Activated CD8-positive, alpha-beta memory T cell treated with anti-CD3 and anti-CD28 coated beads, Interleukin-2, amount 10 ng/mL, durations not matched to agents 7 days and 5 days (primary cell): ENCODE measurements at regions of chr3 and their contacts with region 1.

Region 1: DNA sequence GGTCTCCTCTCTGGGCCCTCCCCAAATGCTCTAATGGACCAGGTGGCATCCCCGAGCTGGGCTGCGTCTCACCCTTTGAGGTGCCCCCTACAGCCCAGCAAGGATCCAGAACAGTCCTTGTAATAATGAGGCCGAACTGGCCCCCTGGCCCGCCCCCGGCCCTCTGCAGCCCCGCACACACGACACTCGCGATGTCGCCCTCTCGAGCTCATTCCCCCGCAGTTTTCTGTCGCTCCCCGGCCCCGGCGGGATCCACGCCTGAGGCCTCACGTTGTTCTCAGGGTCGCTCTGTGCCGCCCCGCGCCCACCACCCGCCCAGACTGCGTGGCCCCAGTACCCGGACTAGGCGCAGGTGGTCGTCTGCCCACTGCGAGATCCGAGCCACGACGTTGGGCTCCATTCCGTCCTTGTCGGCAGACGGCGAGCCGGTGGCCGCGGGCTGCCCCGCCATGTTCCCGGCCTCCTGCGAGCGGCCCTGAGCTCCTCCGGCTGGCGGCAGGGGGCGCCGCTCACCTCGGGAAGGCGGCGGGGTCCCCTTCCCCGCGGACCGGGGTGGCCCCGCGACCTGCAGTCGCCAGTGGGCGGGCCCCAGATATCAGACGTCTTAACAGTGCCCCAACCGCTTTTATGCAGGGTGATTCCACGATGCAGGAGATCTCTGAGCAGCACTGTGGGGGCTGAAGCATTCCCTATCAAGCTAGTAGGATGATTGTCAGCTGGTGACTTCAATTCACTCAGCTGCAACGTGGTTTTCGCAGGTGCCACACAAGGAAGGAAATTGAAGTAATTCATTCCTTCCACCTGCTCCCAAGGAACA is at the start of gene C3orf33:
- DNase-seq: peak; percentile 79
- ATAC-seq: peak; percentile 98
- H3K4me3 Mint-ChIP-seq: peak within 1 kb of the TSS; percentile 83
- H3K27ac Mint-ChIP-seq: peak within 1 kb of the TSS; percentile 76
- H3K4me1 Mint-ChIP-seq: peaks cover 8% of the 10 kb centered on the region
- H3K27me3 Mint-ChIP-seq: peaks cover 9% of the 10 kb centered on the region
- total RNA-seq, gene C3orf33: 1.1 to 1.3 TPM

Region 2: GRCh38 chr3:155791190-155791589 is 14.8 kb before region 1 on chr3:
- CTCF ChIA-PET with region 1: interaction called, 21 read pairs
- DNase-seq: no peak
- ATAC-seq: no peak
- H3K4me3 Mint-ChIP-seq: no peak overlapping the region
- H3K27ac Mint-ChIP-seq: no peak overlapping the region
- H3K4me1 Mint-ChIP-seq: peaks cover under 1% of the 10 kb centered on the region
- H3K27me3 Mint-ChIP-seq: no peaks in the 10 kb centered on the region

Region 3: DNA sequence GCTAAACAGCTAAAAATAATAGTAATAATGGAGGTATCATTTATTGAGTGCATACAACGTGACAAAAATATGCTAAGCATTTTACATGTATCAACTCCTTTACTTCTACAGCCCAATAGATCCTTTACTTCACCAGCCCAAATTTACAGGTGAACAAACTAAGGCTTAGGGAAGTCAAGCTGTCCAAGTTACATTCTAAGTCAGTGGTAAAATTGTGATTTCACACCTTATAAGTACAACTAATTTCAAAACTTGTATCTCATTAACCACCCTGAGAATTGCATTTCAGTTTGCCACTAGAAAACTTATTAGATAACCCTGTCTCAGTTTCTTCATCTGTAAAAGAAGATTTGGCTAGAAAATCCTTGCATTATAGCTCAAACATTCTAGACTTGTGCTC is 37.6 kb after region 1 on chr3:
- CTCF ChIA-PET with region 1: interaction called, 20 read pairs
- DNase-seq: no peak
- ATAC-seq: no peak
- H3K4me3 Mint-ChIP-seq: no peak overlapping the region
- H3K27ac Mint-ChIP-seq: no peak overlapping the region
- H3K4me1 Mint-ChIP-seq: peaks cover 33% of the 10 kb centered on the region
- H3K27me3 Mint-ChIP-seq: no peaks in the 10 kb centered on the region

Region 4: DNA sequence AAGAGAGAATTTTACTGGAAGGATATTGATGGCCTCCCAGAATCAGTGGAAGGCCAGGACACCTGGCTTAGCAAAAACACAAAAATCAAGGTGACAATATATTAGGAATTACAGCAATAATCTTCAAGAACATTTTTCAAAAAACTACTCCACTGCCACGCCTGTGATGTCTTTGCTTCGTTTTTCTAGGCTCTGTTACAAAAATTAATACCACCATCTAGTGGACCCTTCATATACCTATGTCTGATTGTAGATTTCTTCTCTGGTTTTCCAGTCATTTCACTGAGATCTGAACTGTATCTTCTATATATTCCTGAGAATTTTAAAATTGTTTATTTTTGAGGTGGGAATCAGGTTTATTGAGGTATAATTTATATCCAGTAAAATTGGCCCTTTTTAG is 53.8 kb after region 1 on chr3:
- CTCF ChIA-PET with region 1: interaction called, 35 read pairs
- DNase-seq: no peak
- ATAC-seq: peak; percentile 42
- H3K4me3 Mint-ChIP-seq: no peak overlapping the region
- H3K27ac Mint-ChIP-seq: peak overlapping the region; percentile 76
- H3K4me1 Mint-ChIP-seq: peaks cover 41% of the 10 kb centered on the region
- H3K27me3 Mint-ChIP-seq: no peaks in the 10 kb centered on the region

Region 5: DNA sequence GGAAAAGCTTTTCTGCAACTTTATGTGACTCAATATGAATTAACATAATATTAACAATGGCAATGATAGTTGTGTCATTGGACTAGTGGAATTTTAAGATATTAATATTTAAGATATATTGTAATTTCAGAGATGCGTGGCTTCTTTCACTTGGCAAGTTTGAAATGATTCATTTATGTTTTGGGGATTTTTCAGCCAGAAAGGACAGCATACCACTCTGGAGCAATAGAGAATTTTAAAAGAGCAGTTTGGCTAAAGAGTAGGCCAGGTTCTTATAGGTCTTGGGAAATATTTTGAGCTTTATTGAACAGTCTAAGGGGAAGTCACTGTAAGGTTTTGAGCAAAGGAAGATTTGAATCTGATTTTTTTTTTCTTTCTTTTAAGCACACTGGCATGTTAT is 80.9 kb after region 1 on chr3:
- CTCF ChIA-PET with region 1: interaction called, 16 read pairs
- DNase-seq: no peak
- ATAC-seq: no peak
- H3K4me3 Mint-ChIP-seq: no peak overlapping the region
- H3K27ac Mint-ChIP-seq: no peak overlapping the region
- H3K4me1 Mint-ChIP-seq: peaks cover 45% of the 10 kb centered on the region
- H3K27me3 Mint-ChIP-seq: no peaks in the 10 kb centered on the region